ENCODE measurements at regions of chr4 and their contacts with region 1.

Region 1: GRCh38 chr4:14125375-14126129 is 498.0 kb upstream of the BOD1L1 start:
- DNase-seq: peak; percentile 60
- ATAC-seq: peak; percentile 87
- H3K4me3 ChIP-seq: no peak overlapping the region
- H3K4me3 Mint-ChIP-seq: peak overlapping the region; percentile 6
- H3K27ac ChIP-seq: no peak overlapping the region
- H3K27ac Mint-ChIP-seq: no peak overlapping the region
- H3K4me1 ChIP-seq: peaks cover 19 to 23% of the 10 kb centered on the region in 2 donors
- H3K4me1 Mint-ChIP-seq: peaks cover 22% of the 10 kb centered on the region
- H3K27me3 ChIP-seq: no peaks in the 10 kb centered on the region
- H3K27me3 Mint-ChIP-seq: no peaks in the 10 kb centered on the region
- CTCF ChIP-seq: no peak

Region 2: DNA sequence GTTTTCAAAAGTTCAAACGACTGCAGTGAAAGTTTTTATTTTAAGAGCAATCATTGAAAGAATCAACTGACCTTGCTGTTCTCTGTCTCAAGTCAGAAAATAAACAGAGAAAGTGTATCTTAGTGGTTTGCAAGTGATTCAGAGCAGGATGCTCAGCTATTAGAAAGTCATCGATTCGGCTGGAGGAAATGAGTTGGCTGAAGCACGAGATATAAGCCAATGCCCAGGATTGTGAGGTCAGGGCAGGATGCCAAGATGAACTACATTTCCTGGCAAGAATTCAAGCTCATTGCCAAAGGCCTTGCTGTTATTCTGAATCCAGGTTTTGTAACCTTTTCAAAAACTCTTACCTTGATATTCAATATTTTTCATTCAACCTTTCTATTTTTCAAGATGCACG is 43.4 kb after region 1 on chr4:
- CTCF ChIA-PET with region 1: no interaction called
- POLR2A ChIA-PET with region 1: no interaction called
- intact Hi-C with region 1: loop called (anchors 1 kb)
- DNase-seq: no peak
- ATAC-seq: no peak
- H3K4me3 ChIP-seq: no peak overlapping the region
- H3K4me3 Mint-ChIP-seq: no peak overlapping the region
- H3K27ac ChIP-seq: no peak overlapping the region
- H3K27ac Mint-ChIP-seq: no peak overlapping the region
- H3K4me1 ChIP-seq: peaks cover 18 to 25% of the 10 kb centered on the region in 2 donors
- H3K4me1 Mint-ChIP-seq: peaks cover 27% of the 10 kb centered on the region
- H3K27me3 ChIP-seq: no peaks in the 10 kb centered on the region
- H3K27me3 Mint-ChIP-seq: no peaks in the 10 kb centered on the region
- CTCF ChIP-seq: no peak

Region 3: DNA sequence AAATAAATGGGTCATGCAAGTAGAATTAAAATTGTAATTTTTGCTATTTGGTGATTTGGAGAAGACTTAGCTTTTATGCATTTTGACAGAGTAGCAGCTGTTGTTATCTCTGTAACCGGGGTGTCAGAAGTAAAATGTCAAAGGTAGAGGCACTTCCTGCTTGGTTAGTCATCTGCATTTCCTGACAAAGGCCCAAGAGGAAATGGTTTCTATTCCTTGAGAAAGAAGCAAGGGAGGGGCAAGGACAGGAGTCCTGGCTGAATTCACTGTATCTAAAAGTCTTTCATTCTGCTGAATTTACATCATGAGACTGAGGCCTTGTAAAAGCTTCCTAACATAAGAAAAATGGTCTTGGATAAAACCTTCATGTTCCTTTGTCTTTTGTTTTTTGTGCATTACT is 52.9 kb after region 1 on chr4:
- CTCF ChIA-PET with region 1: no interaction called
- POLR2A ChIA-PET with region 1: no interaction called
- intact Hi-C with region 1: loop called (anchors 1 kb)
- DNase-seq: peak; percentile 60
- ATAC-seq: peak; percentile 68
- H3K4me3 ChIP-seq: peak overlapping the region in 2 of 5 experiments; percentile 17
- H3K4me3 Mint-ChIP-seq: peak overlapping the region; percentile 76
- H3K27ac ChIP-seq: peak overlapping the region; percentile 86 to 89
- H3K27ac Mint-ChIP-seq: peak overlapping the region; percentile 89
- H3K4me1 ChIP-seq: peaks cover 70 to 73% of the 10 kb centered on the region in 2 donors
- H3K4me1 Mint-ChIP-seq: peaks cover 91% of the 10 kb centered on the region
- H3K27me3 ChIP-seq: no peaks in the 10 kb centered on the region
- H3K27me3 Mint-ChIP-seq: no peaks in the 10 kb centered on the region
- CTCF ChIP-seq: no peak